PC-3 (cell line): ENCODE measurements at regions of chr3 and their contacts with region 1.

Region 1: GRCh38 chr3:81270603-81271371 is 490.7 kb downstream of the GBE1 start:
- DNase-seq: no peak
- ATAC-seq: no peak
- H3K4me3 ChIP-seq: no peak overlapping the region
- H3K27ac ChIP-seq: no peak overlapping the region
- H3K4me1 ChIP-seq: no peaks in the 10 kb centered on the region
- H3K27me3 ChIP-seq: no peaks in the 10 kb centered on the region
- CTCF ChIP-seq: no peak

Region 2: GRCh38 chr3:81255463-81255862 is 15.3 kb before region 1 on chr3:
- CTCF ChIA-PET with region 1: no interaction called
- POLR2A ChIA-PET with region 1: no interaction called
- intact Hi-C with region 1: loop called (anchors 2 kb)
- DNase-seq: no peak
- ATAC-seq: no peak
- H3K4me3 ChIP-seq: no peak overlapping the region
- H3K27ac ChIP-seq: no peak overlapping the region
- H3K4me1 ChIP-seq: peaks cover 4% of the 10 kb centered on the region; the same call in 1 of the 2 replicates
- H3K27me3 ChIP-seq: no peaks in the 10 kb centered on the region; the same call in 1 of the 2 replicates
- CTCF ChIP-seq: no peak